Activated CD4-positive, alpha-beta memory T cell treated with anti-CD3 and anti-CD28 coated beads, Interleukin-2, amount 10 ng/mL, durations not matched to agents 7 days and 5 days (primary cell): ENCODE measurements at regions of chr12 and their contacts with region 1.

Region 1: DNA sequence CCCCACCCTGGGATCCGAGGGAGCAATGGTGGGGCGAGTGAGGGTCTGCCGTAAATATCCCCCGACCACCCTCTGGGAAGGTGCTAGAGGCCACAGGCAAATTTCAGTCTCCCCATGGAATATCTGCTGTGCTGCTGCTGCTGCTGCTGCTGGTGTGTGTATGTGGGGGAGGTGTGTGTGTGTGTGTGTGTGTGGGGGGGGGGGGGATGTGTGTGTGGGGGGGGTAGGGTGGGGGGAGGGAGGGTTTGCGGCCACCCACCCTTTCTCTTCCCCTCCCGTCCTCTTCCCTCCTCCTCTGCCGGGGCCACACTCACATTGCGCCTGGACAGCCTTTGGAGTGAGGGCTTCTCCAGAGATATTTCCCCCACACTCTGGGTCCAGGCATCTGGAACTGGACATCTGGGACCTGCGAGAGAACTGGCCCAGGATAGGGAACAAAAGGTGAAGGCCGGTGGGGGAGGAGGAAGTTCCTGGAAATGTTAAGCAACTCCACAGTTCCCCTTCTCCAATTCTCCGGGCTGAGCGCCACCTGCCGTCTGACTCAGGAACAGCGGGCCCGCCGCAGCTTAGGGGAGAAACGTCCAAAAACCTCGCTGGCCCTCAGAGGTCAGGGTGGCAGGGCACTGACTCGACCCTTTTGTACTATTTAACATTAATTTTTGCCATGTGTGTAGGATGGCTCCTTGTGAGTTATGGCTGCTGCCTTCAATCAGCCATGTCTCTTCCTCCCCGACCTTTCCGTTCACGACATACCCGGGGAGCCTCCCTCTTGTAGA is at the start of gene C1RL:
- DNase-seq: peak; percentile 83
- H3K4me3 Mint-ChIP-seq: peak within 1 kb of the TSS; percentile 91
- H3K27ac Mint-ChIP-seq: peak within 1 kb of the TSS; percentile 94
- H3K4me1 Mint-ChIP-seq: peaks cover 61% of the 10 kb centered on the region
- H3K27me3 Mint-ChIP-seq: no peaks in the 10 kb centered on the region
- total RNA-seq, gene C1RL: 26.5 to 28.8 TPM

Region 2: DNA sequence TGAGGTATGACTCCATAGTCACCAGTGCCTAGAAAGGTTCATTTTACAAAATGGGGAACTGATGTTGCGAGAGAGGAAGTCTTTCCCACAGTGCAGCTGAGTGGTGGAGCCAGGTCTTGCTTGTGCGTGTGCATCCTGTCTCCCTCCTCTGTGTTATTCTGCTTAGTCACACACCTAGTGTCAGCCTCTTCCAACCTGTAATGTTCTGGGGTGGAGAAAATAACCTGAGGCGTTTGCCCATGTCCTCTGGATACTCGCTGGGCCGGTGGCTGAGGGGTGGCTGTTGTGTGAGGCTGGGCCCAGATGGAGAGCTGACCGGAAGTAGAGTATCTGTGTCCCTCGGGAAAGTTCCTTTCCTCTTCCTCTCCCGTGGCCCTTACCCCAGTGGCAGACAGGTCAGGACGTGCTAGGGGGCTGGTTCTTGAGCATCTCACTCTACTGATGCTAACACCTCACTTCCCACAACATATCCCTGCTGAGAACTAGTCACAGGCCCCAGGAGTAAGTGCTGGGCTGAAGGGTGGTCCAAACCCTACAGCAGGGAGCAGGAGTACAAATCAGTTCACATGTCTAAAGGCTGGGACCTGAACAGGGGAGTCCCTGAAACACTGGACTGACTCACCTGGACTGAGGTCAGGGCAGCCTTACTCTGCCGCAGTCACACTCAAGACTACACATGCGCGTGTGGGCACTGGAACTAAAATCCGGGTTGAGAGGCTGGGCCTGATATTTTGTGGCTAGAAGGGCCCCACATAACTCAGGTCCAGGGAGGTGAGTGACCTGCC is 363.1 kb before region 1 on chr12:
- CTCF ChIA-PET with region 1: no interaction called
- POLR2A ChIA-PET with region 1: no interaction called
- DNase-seq: peak; percentile 45
- H3K4me3 Mint-ChIP-seq: no peak overlapping the region
- H3K27ac Mint-ChIP-seq: peak overlapping the region; percentile 89
- H3K4me1 Mint-ChIP-seq: peaks cover 22% of the 10 kb centered on the region
- H3K27me3 Mint-ChIP-seq: no peaks in the 10 kb centered on the region

Region 3: GRCh38 chr12:6890789-6891645 is 218.0 kb before region 1 on chr12:
- CTCF ChIA-PET with region 1: interaction called, 6 read pairs
- POLR2A ChIA-PET with region 1: interaction called, 12 read pairs
- DNase-seq: peak; percentile 99
- H3K4me3 Mint-ChIP-seq: peak overlapping the region; percentile 79
- H3K27ac Mint-ChIP-seq: peak overlapping the region; percentile 93
- H3K4me1 Mint-ChIP-seq: peaks cover 38% of the 10 kb centered on the region
- H3K27me3 Mint-ChIP-seq: no peaks in the 10 kb centered on the region

Region 4: DNA sequence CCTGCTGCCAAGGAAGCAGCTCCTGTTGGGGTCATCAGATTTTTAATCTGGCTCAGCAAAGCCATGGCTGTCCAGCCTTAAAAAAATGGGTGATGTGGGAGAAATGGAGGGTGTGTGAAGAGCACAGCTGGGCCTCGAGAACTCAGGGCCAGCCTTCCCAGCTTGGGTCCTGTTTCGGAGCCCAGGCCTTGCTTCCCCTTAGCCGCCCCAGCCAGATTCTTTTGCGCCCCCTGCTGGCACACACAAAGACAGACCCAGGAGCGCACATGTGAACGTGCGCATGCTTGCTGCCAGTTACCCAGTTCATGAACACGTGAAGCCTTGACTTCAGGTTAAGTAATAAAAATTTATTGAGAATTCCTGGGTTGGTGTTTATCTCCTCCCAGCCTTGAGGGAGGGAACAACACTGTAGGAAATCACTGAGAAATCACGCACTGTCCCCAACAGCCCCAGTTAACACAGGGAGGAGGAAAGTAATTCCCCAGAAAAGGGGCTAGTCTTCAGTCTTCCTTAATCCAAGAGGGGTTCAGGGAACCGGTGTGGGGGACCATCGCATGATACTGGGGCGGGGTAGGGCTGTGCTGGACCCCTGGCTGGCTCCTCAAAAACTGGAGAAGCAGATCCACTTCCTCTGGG is 143.8 kb before region 1 on chr12:
- CTCF ChIA-PET with region 1: interaction called, 10 read pairs
- POLR2A ChIA-PET with region 1: interaction called, 31 read pairs
- DNase-seq: peak; percentile 89
- H3K4me3 Mint-ChIP-seq: no peak overlapping the region
- H3K27ac Mint-ChIP-seq: peak overlapping the region; percentile 83
- H3K4me1 Mint-ChIP-seq: peaks cover 79% of the 10 kb centered on the region
- H3K27me3 Mint-ChIP-seq: no peaks in the 10 kb centered on the region

Region 5: DNA sequence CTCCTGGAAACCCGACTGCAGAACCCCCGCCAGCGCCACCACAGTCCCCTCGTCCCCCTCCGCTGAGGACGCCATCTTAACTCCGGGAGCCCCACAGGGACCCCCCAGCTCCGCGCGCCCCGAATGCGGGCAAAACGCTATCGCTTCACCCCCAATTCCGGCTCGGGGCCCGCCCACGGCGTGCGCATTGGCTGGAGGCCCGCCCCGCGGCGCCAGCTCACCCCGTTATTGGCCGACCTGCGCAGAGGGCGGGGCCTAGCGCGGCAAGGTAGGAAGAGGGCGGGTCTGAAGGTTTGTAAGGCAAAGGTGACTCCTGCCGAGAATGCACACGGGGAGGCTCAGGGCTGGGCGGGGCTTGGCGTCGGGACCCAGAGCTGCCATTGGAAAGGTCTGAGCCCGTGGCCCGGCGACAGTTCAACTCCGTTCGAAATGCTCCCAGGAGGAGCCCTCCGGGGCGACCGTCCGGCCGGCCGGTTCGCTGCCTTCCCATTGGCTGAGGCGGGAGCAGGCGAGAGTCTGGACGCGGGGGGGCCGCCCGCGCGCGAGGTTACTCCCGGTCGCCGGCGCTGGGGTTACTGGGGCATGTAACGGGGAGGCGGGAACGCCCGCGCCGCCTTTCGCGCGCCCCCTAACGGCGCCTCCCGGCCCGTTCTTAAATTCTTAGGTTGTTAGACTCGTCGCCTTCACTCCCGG is 90.5 kb before region 1 on chr12 and contains the start of gene LPCAT3:
- CTCF ChIA-PET with region 1: interaction called, 19 read pairs
- POLR2A ChIA-PET with region 1: interaction called, 24 read pairs
- DNase-seq: peak; percentile 97
- H3K4me3 Mint-ChIP-seq: peak within 1 kb of the TSS; percentile 84
- H3K27ac Mint-ChIP-seq: peak within 1 kb of the TSS; percentile 81
- H3K4me1 Mint-ChIP-seq: peaks cover 30% of the 10 kb centered on the region
- H3K27me3 Mint-ChIP-seq: no peaks in the 10 kb centered on the region
- total RNA-seq, gene LPCAT3: 34.6 to 37.0 TPM

Region 6: DNA sequence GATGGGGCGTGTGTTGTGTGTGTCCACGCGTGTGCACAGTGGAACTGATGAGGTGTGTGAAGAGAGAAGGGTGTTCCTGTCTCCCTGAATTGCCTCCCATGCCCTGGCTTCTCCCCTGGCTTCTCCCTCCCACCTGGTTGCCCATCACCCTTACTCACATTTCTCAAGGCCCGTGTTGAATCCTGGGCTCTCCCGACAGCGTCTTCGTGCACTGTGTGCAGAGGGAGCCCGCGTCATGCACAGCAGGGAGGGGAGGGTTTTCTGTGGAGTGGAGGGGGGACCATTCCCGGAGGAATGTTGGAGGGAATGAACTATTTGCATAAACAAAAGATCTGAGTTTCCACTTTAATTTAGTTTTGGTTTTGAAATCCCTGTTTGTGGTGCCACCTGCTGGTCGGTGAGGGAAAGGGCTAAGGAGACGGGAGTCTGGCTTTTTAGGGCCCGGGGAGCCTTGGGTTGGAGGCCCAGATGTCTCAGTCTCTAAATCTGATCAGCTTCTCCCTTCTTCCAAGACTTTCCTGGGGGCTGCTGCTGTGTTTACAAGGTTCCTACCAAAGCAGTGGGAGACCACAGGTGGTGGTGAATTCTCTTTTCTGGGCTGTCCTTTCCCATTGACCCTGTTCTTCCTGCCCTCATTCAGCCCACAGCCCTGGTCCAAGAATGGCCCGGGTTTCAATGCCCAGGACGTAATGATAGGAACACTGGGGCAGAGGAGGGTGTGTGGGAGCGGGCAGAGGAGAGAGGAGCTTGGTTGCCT is 16.6 kb before region 1 on chr12 and contains the start of gene C1R:
- CTCF ChIA-PET with region 1: interaction called, 35 read pairs
- POLR2A ChIA-PET with region 1: interaction called, 20 read pairs
- DNase-seq: peak; percentile 75
- H3K4me3 Mint-ChIP-seq: peak within 1 kb of the TSS; percentile 71
- H3K27ac Mint-ChIP-seq: no peak within 1 kb of the TSS
- H3K4me1 Mint-ChIP-seq: peaks cover 8% of the 10 kb centered on the region
- H3K27me3 Mint-ChIP-seq: peaks cover 6% of the 10 kb centered on the region
- total RNA-seq, gene C1R: 2.7 to 3.8 TPM

Region 7: DNA sequence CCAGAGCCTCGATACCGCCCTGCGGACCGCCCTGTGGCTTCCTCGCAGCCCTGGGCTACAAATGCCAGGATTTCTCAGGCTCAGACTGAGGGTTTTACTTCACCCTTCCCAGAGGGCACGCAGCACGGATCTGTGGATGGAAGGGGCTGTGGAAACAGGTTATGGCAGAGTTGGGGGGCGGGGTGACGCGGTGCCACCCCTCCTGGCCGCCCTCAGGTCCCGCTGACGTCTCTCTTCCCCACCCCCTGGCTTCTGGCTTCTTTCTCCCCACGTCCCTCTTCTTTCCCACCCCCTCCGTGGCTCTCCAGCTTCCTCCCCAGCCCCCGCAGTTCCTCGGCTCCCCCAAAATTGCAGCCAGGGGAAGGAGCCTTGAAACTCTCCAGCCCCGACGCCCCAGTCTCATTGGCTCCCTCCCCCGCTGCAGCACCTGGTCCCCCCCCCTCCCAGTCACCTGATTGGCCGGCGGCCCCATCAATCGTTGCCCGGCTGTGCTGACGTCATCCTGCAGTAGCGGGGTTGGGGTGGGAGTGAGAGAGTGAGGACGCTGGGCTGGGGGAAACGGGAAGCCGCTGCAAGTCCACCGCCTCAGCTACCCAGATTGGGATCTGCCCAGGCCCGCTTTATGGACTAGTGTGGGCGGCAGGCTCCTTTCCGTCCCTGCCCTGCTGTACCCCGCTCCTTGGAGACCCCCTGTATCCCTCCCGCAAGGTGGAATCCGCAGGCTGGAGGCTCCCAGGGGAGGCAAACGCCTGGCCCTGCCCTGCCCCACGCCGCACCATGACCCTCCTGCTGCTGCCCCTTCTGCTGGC is 21.1 kb after region 1 on chr12 and contains the start of gene CLSTN3:
- CTCF ChIA-PET with region 1: interaction called, 12 read pairs
- POLR2A ChIA-PET with region 1: interaction called, 26 read pairs
- DNase-seq: peak; percentile 89
- H3K4me3 Mint-ChIP-seq: peak within 1 kb of the TSS; percentile 100
- H3K27ac Mint-ChIP-seq: peak within 1 kb of the TSS; percentile 91
- H3K4me1 Mint-ChIP-seq: peaks cover 43% of the 10 kb centered on the region
- H3K27me3 Mint-ChIP-seq: no peaks in the 10 kb centered on the region
- total RNA-seq, gene CLSTN3: 148 to 152 TPM

Region 8: GRCh38 chr12:7210642-7211151 is 101.7 kb after region 1 on chr12:
- CTCF ChIA-PET with region 1: no interaction called
- POLR2A ChIA-PET with region 1: no interaction called
- DNase-seq: no peak
- H3K4me3 Mint-ChIP-seq: no peak overlapping the region
- H3K27ac Mint-ChIP-seq: no peak overlapping the region
- H3K4me1 Mint-ChIP-seq: no peaks in the 10 kb centered on the region
- H3K27me3 Mint-ChIP-seq: peaks cover 3% of the 10 kb centered on the region

Region 9: GRCh38 chr12:7303230-7303629 is 194.2 kb after region 1 on chr12:
- CTCF ChIA-PET with region 1: no interaction called
- POLR2A ChIA-PET with region 1: no interaction called
- DNase-seq: no peak
- H3K4me3 Mint-ChIP-seq: no peak overlapping the region
- H3K27ac Mint-ChIP-seq: no peak overlapping the region
- H3K4me1 Mint-ChIP-seq: no peaks in the 10 kb centered on the region
- H3K27me3 Mint-ChIP-seq: peaks cover 3% of the 10 kb centered on the region

Region 10: DNA sequence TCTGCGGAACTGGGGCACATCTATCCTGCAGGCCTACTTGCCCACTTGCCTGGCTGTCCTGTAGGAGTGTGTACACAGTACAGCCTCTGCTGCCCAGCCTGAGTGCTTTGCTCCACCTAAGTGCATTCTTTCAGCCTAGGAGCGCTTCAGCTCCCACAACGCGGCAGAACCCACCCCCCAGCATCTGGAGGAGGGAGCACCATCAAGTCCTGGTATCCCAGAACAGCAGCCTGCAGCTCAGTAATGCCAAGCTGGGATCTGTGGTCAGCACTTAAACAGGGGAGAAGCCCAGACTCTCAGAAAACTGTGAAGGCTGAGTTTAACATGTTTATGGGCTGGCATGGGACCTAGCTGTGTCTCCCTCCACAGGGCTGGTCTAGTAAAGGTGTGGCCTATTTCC is 474.6 kb after region 1 on chr12:
- CTCF ChIA-PET with region 1: no interaction called
- POLR2A ChIA-PET with region 1: no interaction called
- DNase-seq: no peak
- H3K4me3 Mint-ChIP-seq: no peak overlapping the region
- H3K27ac Mint-ChIP-seq: no peak overlapping the region
- H3K4me1 Mint-ChIP-seq: no peaks in the 10 kb centered on the region
- H3K27me3 Mint-ChIP-seq: peaks cover 28% of the 10 kb centered on the region